PC-9 (cell line): ENCODE measurements at regions of chr16 and their contacts with region 1.

Region 1: GRCh38 chr16:4315186-4316109 is at the start of gene GLIS2:
- DNase-seq: peak in 1 of 2 experiments; percentile 85
- H3K4me3 ChIP-seq: peak within 1 kb of the TSS; percentile 78
- H3K27ac ChIP-seq: no peak within 1 kb of the TSS
- H3K4me1 ChIP-seq: peaks cover 20% of the 10 kb centered on the region
- H3K27me3 ChIP-seq: no peaks in the 10 kb centered on the region
- CTCF ChIP-seq: no peak
- total RNA-seq, gene GLIS2: 44.2 and 48.3 TPM in 2 replicates

Region 2: DNA sequence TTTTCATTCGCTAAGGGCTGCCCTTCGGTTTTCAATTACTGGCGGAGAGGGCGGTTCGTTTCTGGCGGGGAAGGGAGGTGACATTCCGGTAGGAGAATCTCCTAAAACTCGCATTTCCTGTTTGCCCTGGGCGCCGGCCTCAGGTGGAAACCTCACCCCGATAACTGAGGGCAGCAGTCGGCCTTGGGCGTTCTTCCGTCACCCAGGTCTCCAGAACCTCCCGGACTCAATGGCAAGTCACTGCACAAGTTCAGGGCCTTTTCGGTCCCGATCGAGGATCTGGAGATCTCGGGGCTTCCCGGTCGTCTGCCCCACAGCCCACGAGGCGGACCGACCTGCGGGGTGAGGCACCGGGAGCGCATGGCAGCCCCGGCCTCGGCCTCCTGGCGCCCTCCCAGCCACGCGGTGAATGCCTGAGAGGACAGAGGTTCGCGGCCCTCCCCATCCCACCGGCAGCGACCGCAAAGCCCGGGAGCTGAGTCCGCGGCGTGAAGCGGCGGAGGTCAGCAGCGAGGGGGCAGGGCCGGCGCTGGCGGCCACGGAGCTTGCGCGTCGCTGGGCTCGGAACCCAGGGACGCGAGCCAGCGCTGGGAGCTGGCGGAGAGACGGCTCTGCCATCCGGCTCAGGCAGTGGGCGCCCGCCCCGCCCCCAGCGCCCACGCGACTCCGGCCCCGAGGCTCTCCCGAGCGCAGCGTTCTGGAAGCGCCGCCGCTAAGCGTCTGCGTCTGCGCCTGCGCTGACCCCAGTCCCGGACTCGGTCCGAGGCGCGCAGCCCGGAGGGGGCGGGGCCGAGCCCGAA is 132.0 kb before region 1 on chr16:
- CTCF ChIA-PET with region 1: no interaction called
- POLR2A ChIA-PET with region 1: no interaction called
- intact Hi-C with region 1: no loop called
- DNase-seq: peak; percentile 92 to 97
- H3K4me3 ChIP-seq: peak overlapping the region; percentile 80
- H3K27ac ChIP-seq: peak overlapping the region; percentile 95
- H3K4me1 ChIP-seq: peaks cover 23% of the 10 kb centered on the region
- H3K27me3 ChIP-seq: no peaks in the 10 kb centered on the region
- CTCF ChIP-seq: no peak

Region 3: GRCh38 chr16:4271176-4272066 is 44.0 kb before region 1 on chr16:
- CTCF ChIA-PET with region 1: interaction called, 4 read pairs
- POLR2A ChIA-PET with region 1: interaction called, 3 read pairs
- intact Hi-C with region 1: loop called (anchors 5 kb)
- DNase-seq: peak; percentile 82 to 94
- H3K4me3 ChIP-seq: peak overlapping the region; percentile 81
- H3K27ac ChIP-seq: peak overlapping the region; percentile 92
- H3K4me1 ChIP-seq: peaks cover 7% of the 10 kb centered on the region
- H3K27me3 ChIP-seq: no peaks in the 10 kb centered on the region
- CTCF ChIP-seq: no peak

Region 4: DNA sequence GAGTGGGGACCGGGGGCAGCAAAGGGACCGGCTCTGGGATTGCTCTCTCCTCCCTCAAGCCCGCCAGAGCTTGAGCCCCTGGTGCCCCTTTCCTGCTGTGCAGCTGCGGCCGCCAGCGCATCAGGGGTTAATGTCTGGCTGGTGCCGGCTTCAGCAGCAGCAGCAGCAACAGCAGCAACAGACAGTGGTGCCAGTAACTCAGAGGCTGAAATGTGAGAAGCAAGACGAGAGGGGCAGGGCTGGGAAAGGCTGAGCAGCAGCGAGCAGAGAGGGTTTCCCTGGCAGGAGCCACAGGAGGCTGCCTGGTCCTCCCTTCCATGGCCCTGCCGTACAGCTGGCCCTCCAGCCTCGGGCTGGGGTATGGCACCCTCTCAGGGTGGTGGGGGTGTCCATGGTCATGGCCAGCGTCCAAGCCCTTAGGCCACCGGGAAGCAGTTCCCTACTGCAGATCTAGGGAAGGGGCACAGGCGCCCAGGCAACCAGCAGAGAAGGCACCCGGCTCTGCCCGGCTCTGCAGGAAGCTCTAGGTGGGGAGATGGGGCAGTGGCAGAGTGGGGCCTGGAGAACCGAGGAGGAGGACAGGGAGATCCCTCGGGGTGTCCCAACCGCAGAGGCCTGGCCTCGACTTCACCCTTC is 21.5 kb before region 1 on chr16:
- CTCF ChIA-PET with region 1: interaction called, 9 read pairs
- POLR2A ChIA-PET with region 1: interaction called, 17 read pairs
- intact Hi-C with region 1: loop called (anchors 1 kb)
- DNase-seq: peak; percentile 60 to 83
- H3K4me3 ChIP-seq: no peak overlapping the region
- H3K27ac ChIP-seq: 0 out of 2 replicates have a peak overlapping the region, but pooled peaks have one; percentile 2
- H3K4me1 ChIP-seq: peaks cover 55% of the 10 kb centered on the region
- H3K27me3 ChIP-seq: no peaks in the 10 kb centered on the region
- CTCF ChIP-seq: no peak

Region 5: DNA sequence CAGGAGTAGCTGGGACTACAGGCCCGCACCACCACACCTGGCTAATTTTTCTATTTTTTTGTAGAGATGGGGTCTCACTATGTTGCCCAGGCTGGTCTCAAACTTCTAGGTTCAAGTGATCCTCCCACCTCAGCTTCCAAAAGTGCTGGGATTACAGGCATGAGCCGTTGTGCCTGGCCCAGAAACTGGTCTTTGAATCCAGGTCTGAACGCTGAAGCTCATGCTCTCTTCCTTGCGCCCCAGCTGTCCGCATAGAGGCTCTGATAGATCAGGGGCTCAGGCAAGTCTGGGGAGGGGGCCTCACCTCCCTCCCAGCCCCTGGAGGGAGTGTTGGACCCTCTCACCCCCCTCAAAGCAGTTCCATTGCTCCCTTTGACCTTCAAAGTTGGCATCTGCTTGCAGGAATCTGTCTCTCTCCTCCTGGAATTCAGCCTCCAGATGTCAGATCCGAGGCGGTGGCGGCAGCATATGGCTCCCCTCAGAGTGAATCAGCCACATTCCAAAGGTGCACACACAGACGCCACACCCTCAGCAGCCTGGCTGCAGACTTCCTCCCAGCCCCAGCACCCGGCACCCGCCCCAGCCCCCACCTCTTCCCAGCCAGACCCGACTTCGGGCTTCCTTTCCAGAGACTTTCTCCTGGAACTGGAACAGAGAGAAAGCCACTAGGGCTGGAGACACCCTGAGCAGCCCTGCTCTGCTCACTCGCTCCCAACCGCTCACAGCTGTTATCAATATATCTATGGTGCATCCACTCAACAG is 16.5 kb before region 1 on chr16:
- CTCF ChIA-PET with region 1: interaction called, 21 read pairs
- POLR2A ChIA-PET with region 1: interaction called, 17 read pairs
- intact Hi-C with region 1: no loop called
- DNase-seq: peak; percentile 91 to 96
- H3K4me3 ChIP-seq: peak overlapping the region; percentile 15; the same call in 1 of the 2 replicates
- H3K27ac ChIP-seq: peak overlapping the region; percentile 73
- H3K4me1 ChIP-seq: peaks cover 33% of the 10 kb centered on the region
- H3K27me3 ChIP-seq: no peaks in the 10 kb centered on the region
- CTCF ChIP-seq: no peak

Region 6: GRCh38 chr16:4494746-4495490 is 179.5 kb after region 1 on chr16:
- CTCF ChIA-PET with region 1: no interaction called
- POLR2A ChIA-PET with region 1: no interaction called
- intact Hi-C with region 1: no loop called
- DNase-seq: peak; percentile 67 to 82
- H3K4me3 ChIP-seq: no peak overlapping the region
- H3K27ac ChIP-seq: peak overlapping the region; percentile 72
- H3K4me1 ChIP-seq: peaks cover 52% of the 10 kb centered on the region
- H3K27me3 ChIP-seq: no peaks in the 10 kb centered on the region
- CTCF ChIP-seq: no peak